Heart right ventricle (tissue), 16 donors: ENCODE measurements at regions of chr17 and their contacts with region 1.

Region 1: DNA sequence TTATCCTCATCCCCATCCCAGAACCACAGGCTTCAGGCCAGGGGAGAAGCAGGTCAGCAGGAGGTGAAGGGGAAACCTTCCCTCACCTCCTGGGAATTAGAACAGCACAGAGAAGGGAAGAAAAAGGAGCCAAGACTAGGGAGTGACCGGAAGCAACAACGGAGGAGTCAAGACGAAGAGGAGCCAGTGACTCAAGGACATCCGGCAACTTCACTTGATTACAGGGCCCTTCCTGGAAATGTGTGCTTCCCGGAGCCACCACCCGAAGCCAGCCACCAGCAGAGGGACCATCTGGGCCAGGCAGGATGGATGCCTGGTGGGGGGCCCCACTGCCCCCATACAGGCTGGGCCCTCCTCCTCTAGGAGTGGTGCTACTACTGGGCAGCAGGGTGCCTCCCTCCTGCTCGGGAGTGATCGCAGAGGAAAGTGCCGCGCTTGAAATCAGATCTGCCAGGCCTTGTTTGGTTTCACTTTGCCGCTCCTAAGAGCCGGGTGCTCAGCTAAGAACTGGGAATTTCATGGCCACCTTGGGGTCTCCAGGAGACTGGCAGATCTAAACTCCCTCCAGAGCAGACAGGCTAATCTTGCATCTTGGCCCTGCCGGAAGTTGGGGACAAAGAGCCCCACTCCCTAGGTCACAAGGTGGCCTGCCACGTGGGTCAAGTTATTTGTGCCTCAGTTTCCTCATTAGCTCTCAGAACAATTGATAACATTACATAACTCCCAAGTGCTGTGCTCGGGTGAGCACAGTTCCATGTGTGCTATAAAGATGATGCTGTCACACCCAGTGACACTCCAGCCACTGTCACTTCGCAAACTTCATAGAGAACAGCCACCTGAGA is 6.6 kb downstream of the CDC42EP4 start:
- DNase-seq: peak; percentile 71 to 86
- ATAC-seq: peak; percentile 63 to 84 (median 74)
- H3K4me3 ChIP-seq: peak overlapping the region in 9 of 10 donors; percentile 6 to 49 (median 37)
- H3K27ac ChIP-seq: peak overlapping the region; percentile 33 to 99 (median 98)
- H3K4me1 ChIP-seq: peaks cover 38 to 100% (median 95%) of the 10 kb centered on the region in 9 donors
- H3K27me3 ChIP-seq: no peaks in the 10 kb centered on the region
- CTCF ChIP-seq: peak in 8 of 9 donors; percentile 8 to 66 (median 46)

Region 2: DNA sequence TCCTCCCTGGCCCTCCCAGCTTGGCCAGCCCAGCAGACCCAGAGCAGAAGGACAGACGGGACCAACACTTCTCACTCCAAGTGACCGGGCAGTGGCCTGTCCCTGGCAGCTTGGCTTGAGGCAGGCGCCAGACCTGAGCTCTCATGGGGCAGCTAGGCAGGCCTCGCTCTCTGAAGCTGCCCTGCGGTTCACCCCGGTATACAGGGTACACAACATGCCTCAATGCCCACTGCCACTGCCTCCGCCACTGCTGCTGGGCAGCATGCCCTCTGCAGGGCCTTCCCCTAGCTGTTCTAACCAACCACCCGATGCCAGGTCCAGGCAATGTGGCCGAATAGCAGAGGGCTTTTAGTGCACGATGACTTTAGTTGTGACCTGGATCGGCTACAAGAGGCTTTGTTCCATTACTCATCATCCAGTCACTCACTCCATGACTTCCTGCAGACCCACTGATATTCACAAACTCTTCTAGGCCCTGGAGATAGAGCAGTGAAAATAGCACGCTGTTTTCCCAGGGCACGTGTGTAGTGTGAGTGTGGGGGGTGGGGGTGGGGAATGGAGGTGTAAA is 13.1 kb before region 1 on chr17:
- intact Hi-C with region 1: loop called in 2 of 10 experiments (anchors 1 to 2 kb)
- DNase-seq: peak; percentile 73 to 75
- ATAC-seq: peak; percentile 45 to 85 (median 72)
- H3K4me3 ChIP-seq: peak overlapping the region in 3 of 10 donors; percentile 9 to 11 (median 10)
- H3K27ac ChIP-seq: peak overlapping the region; percentile 89 to 98 (median 95)
- H3K4me1 ChIP-seq: peaks cover 74 to 99% (median 83%) of the 10 kb centered on the region in 9 donors
- H3K27me3 ChIP-seq: no peaks in the 10 kb centered on the region
- CTCF ChIP-seq: no peak

Region 3: DNA sequence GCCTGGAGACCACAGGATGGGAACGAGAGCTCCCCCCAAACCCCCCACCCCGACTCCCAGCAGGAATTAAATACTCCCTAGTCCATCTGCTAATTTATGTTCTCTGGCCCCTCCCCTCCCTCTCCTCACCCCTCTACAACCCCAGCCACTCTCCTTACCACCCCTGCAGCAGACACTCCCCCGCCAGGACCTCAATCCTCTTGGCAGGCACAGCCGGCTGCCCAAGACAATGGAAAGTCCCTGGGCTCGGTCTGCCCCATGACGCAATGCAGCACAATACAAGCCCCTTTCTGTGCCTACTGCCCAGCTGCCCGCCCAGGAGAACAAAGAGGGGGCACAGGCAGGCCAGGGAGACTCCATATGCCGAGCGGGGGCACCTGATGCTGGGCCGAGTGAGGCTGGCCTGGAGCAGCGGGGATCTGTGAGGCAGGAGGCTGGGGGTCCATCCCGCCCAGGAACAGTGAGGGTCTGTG is 36.9 kb after region 1 on chr17:
- intact Hi-C with region 1: loop called in 1 of 10 experiments (anchors 2 kb)
- DNase-seq: peak; percentile 65 to 67
- ATAC-seq: peak; percentile 49 to 89 (median 78)
- H3K4me3 ChIP-seq: no peak overlapping the region
- H3K27ac ChIP-seq: peak overlapping the region in 6 of 10 donors; percentile 41 to 71 (median 57)
- H3K4me1 ChIP-seq: peaks cover 3 to 38% (median 27%) of the 10 kb centered on the region in 9 donors
- H3K27me3 ChIP-seq: no peaks in the 10 kb centered on the region
- CTCF ChIP-seq: no peak

Region 4: DNA sequence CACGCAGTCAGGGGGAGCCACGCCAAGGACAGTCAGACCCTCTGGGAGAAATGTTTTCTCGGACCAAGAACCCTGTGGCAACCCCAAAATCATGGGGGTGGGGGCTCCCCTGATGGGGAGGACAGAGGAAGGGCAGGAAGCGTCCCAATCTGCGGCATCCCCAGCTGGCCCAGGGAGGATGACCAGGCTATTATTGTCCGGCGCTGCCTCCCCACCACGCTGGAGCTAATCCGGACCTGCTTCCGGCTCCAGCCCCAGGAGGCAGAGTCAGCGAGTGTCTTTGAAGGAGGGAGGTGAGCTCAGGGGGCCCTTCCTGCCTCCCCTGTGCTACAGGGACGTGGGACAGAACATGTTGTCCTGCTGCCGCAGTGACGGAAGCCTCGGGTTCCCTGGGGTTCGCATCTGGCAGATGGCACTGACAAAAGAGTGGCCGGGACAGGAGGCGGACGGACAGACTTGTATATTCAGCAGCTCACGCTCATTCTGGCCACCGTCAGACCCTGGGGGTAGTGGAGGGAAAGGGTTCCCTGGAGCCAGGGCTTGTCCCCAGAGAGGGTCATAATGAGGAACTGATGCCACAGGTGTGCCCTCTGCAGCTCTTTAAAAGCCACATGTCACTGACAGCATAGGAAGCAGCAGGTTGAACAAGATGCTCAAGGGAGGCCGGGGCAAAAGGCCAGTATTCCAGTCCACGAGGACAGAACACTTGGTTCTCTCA is 60.9 kb after region 1 on chr17:
- intact Hi-C with region 1: loop called (anchors 2 to 10 kb)
- DNase-seq: peak; percentile 65 to 66
- ATAC-seq: peak; percentile 40 to 88 (median 70)
- H3K4me3 ChIP-seq: peak overlapping the region in 6 of 10 donors; percentile 4 to 24 (median 9)
- H3K27ac ChIP-seq: peak overlapping the region; percentile 65 to 82 (median 74)
- H3K4me1 ChIP-seq: peaks cover 10 to 32% (median 27%) of the 10 kb centered on the region in 9 donors
- H3K27me3 ChIP-seq: no peaks in the 10 kb centered on the region
- CTCF ChIP-seq: no peak